Mammary epithelial cell (primary cell): ENCODE measurements at regions of chr19 and their contacts with region 1.

Region 1: GRCh38 chr19:46068345-46069258 is 27.8 kb upstream of the IGFL4 start:
- DNase-seq: peak; percentile 99
- H3K4me3 ChIP-seq: no peak overlapping the region
- H3K27ac ChIP-seq: peak overlapping the region; percentile 81
- H3K4me1 ChIP-seq: peaks cover 64% of the 10 kb centered on the region
- H3K27me3 ChIP-seq: no peaks in the 10 kb centered on the region
- CTCF ChIP-seq: no peak

Region 2: DNA sequence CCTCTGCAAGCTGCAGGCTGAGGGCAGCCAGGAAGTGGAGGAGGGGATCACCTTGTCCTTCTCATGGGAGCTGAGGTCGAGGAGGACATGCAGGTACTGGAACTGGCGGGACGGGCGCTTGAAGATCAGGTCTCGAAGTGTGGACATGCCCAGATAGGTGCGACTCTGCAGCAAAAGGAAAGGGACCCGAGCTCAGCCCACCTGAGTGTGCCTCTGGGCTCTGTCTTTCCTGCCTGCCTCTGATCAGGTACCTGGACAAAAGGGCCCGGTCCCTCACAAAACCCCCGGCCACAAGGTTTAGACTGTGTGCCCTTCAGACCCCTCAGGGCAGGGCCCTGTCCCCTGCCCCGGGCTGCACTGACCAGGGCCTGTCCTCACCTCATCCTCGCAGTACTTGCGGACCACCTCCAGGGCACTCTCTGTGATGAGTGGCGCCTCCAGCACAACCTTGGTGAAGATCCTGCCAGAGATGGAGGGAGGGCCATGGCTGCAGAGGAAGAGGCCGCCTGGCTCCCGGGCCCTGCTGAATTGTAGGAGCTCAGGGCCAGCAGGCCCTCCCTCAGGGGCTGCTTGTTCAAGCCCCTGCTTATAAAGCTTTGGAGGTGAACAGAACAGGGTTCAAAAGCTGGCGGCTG is 241.0 kb before region 1 on chr19:
- CTCF ChIA-PET with region 1: no interaction called
- dilution Hi-C with region 1: no loop called
- in situ Hi-C with region 1: no loop called
- intact Hi-C with region 1: no loop called
- DNase-seq: no peak
- H3K4me3 ChIP-seq: no peak overlapping the region
- H3K27ac ChIP-seq: no peak overlapping the region
- H3K4me1 ChIP-seq: no peaks in the 10 kb centered on the region
- H3K27me3 ChIP-seq: no peaks in the 10 kb centered on the region
- CTCF ChIP-seq: no peak

Region 3: DNA sequence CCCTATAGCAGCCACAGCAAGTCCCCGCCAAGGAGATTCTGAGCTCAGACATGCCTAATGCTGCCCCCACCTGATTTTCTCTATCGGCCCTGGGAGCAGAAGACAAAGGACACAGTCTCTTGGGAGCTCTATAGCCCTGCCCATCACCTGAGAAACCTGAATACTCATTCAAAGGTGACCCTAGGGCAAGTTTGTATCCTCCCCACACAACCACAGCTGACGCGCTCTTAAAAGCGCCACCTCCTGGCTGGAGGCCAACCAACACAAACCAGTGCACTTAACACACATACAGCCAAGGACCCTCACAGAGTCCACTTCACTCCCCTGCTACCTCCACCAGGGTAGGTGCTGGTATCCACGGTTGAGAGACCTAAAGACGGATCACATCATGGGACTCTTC is 19.0 kb before region 1 on chr19:
- CTCF ChIA-PET with region 1: no interaction called
- dilution Hi-C with region 1: no loop called
- in situ Hi-C with region 1: no loop called
- intact Hi-C with region 1: loop called (anchors 2 kb)
- DNase-seq: peak; percentile 92
- H3K4me3 ChIP-seq: no peak overlapping the region
- H3K27ac ChIP-seq: peak overlapping the region; percentile 52
- H3K4me1 ChIP-seq: peaks cover 12% of the 10 kb centered on the region
- H3K27me3 ChIP-seq: no peaks in the 10 kb centered on the region
- CTCF ChIP-seq: no peak

Region 4: DNA sequence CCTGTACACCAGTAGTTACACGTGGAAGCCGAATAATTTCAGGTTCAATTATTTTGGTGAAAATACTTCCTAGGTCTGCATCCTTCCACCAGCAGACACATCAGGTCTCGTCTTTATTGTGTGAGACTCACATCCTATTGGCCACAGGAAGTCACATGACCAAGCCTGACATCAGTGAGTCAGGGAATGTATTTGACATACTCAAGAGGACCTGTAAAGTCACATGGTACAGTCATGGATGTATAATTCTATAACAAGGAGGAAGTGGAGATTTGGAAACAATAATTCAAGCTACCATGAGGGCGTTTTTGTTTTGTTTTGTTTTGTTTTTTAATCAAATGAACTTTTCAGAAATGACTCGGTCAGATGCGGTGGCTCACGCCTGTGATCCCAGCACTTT is 219.0 kb after region 1 on chr19:
- CTCF ChIA-PET with region 1: no interaction called
- dilution Hi-C with region 1: no loop called
- in situ Hi-C with region 1: no loop called
- intact Hi-C with region 1: no loop called
- DNase-seq: no peak
- H3K4me3 ChIP-seq: no peak overlapping the region
- H3K27ac ChIP-seq: no peak overlapping the region
- H3K4me1 ChIP-seq: peaks cover 10% of the 10 kb centered on the region
- H3K27me3 ChIP-seq: no peaks in the 10 kb centered on the region
- CTCF ChIP-seq: no peak